ENCODE measurements at regions of chr1 and their contacts with region 1.

Region 1: GRCh38 chr1:155172732-155173477 is at the start of gene KRTCAP2:
- DNase-seq: peak; percentile 87 to 97 (median 94)
- ATAC-seq: peak; percentile 82
- H3K4me3 ChIP-seq: peak within 1 kb of the TSS; percentile 72 to 98
- H3K4me3 Mint-ChIP-seq: peak within 1 kb of the TSS; percentile 96
- H3K27ac ChIP-seq: peak within 1 kb of the TSS; percentile 73 to 98
- H3K27ac Mint-ChIP-seq: peak within 1 kb of the TSS; percentile 97
- H3K4me1 ChIP-seq: peaks cover 47% of the 10 kb centered on the region
- H3K4me1 Mint-ChIP-seq: peaks cover 43% of the 10 kb centered on the region
- H3K27me3 ChIP-seq: no peaks in the 10 kb centered on the region
- H3K27me3 Mint-ChIP-seq: no peaks in the 10 kb centered on the region
- CTCF ChIP-seq: peak; percentile 90
- total RNA-seq, gene KRTCAP2: 58.9 to 71.2 TPM

Region 2: GRCh38 chr1:155050560-155051341 is 122.2 kb before region 1 on chr1 and contains the start of gene ADAM15:
- CTCF ChIA-PET with region 1: interaction called, 14 read pairs
- POLR2A ChIA-PET with region 1: no interaction called
- intact Hi-C with region 1: loop called in 1 of 2 experiments (anchors 5 kb)
- DNase-seq: peak; percentile 64 to 88 (median 80)
- ATAC-seq: peak; percentile 83
- H3K4me3 ChIP-seq: peak within 1 kb of the TSS; percentile 86 to 94
- H3K4me3 Mint-ChIP-seq: peak within 1 kb of the TSS; percentile 86
- H3K27ac ChIP-seq: peak within 1 kb of the TSS; percentile 45 to 65
- H3K27ac Mint-ChIP-seq: peak within 1 kb of the TSS; percentile 85
- H3K4me1 ChIP-seq: peaks cover 27% of the 10 kb centered on the region
- H3K4me1 Mint-ChIP-seq: peaks cover 19% of the 10 kb centered on the region
- H3K27me3 ChIP-seq: no peaks in the 10 kb centered on the region
- H3K27me3 Mint-ChIP-seq: no peaks in the 10 kb centered on the region
- CTCF ChIP-seq: peak; percentile 99
- total RNA-seq, gene ADAM15: 10.8 to 11.8 TPM

Region 3: DNA sequence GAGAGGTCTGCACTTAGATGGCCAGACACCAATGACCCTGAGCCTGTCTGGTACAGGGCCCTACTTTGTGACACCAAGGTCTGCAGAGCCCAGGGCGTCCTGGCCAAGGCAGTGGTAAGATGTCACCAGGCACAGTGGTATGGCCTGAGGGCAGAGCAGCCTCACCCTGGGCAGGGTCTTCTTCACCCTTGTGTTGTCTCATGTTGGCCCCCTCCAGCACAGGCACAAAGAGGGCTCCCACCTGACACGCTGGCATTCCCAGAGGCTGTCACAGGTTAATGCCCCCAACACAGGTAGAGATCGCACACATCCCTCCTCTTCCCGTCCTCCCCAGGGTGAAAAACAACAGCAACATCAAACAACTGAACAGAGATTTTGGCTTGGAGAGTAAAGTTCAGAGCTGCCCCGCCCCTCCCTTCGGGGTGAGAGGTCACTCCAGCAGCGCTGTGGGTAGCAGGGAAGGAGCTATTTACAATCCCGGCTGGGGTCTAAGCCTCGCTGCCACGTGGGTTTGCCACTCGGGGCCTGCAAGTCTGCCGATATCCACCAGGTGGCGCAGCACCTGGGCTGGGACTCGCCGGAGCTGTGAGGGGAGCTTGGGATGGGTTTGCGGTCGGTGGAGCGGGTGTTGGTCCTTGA is 81.7 kb before region 1 on chr1:
- CTCF ChIA-PET with region 1: interaction called, 270 read pairs
- POLR2A ChIA-PET with region 1: interaction called, 10 read pairs
- intact Hi-C with region 1: loop called (anchors 1 kb)
- DNase-seq: peak; percentile 52 to 89 (median 79)
- ATAC-seq: peak; percentile 92
- H3K4me3 ChIP-seq: no peak overlapping the region
- H3K4me3 Mint-ChIP-seq: no peak overlapping the region
- H3K27ac ChIP-seq: no peak overlapping the region
- H3K27ac Mint-ChIP-seq: no peak overlapping the region
- H3K4me1 ChIP-seq: peaks cover 11% of the 10 kb centered on the region
- H3K4me1 Mint-ChIP-seq: peaks cover 8% of the 10 kb centered on the region
- H3K27me3 ChIP-seq: no peaks in the 10 kb centered on the region
- H3K27me3 Mint-ChIP-seq: peaks cover 3% of the 10 kb centered on the region
- CTCF ChIP-seq: peak; percentile 94

Region 4: GRCh38 chr1:155185351-155186066 is 12.6 kb after region 1 on chr1:
- CTCF ChIA-PET with region 1: interaction called, 10 read pairs
- POLR2A ChIA-PET with region 1: no interaction called
- intact Hi-C with region 1: no loop called
- DNase-seq: peak in 1 of 9 experiments; percentile 36
- ATAC-seq: peak; percentile 23
- H3K4me3 ChIP-seq: no peak overlapping the region
- H3K4me3 Mint-ChIP-seq: no peak overlapping the region
- H3K27ac ChIP-seq: no peak overlapping the region
- H3K27ac Mint-ChIP-seq: no peak overlapping the region
- H3K4me1 ChIP-seq: no peaks in the 10 kb centered on the region
- H3K4me1 Mint-ChIP-seq: peaks cover 4% of the 10 kb centered on the region
- H3K27me3 ChIP-seq: no peaks in the 10 kb centered on the region
- H3K27me3 Mint-ChIP-seq: no peaks in the 10 kb centered on the region
- CTCF ChIP-seq: no peak

Region 5: GRCh38 chr1:155208541-155209311 is 35.8 kb after region 1 on chr1 and contains the start of gene MTX1:
- CTCF ChIA-PET with region 1: interaction called, 32 read pairs
- POLR2A ChIA-PET with region 1: no interaction called
- intact Hi-C with region 1: loop called (anchors 1 kb)
- DNase-seq: peak; percentile 77 to 94 (median 88)
- ATAC-seq: peak; percentile 84
- H3K4me3 ChIP-seq: peak within 1 kb of the TSS; percentile 79 to 86
- H3K4me3 Mint-ChIP-seq: peak within 1 kb of the TSS; percentile 86
- H3K27ac ChIP-seq: peak within 1 kb of the TSS; percentile 99
- H3K27ac Mint-ChIP-seq: peak within 1 kb of the TSS; percentile 95
- H3K4me1 ChIP-seq: peaks cover 22% of the 10 kb centered on the region
- H3K4me1 Mint-ChIP-seq: peaks cover 20% of the 10 kb centered on the region
- H3K27me3 ChIP-seq: no peaks in the 10 kb centered on the region
- H3K27me3 Mint-ChIP-seq: no peaks in the 10 kb centered on the region
- CTCF ChIP-seq: no peak
- total RNA-seq, gene MTX1: 24.4 to 25.8 TPM

Region 6: DNA sequence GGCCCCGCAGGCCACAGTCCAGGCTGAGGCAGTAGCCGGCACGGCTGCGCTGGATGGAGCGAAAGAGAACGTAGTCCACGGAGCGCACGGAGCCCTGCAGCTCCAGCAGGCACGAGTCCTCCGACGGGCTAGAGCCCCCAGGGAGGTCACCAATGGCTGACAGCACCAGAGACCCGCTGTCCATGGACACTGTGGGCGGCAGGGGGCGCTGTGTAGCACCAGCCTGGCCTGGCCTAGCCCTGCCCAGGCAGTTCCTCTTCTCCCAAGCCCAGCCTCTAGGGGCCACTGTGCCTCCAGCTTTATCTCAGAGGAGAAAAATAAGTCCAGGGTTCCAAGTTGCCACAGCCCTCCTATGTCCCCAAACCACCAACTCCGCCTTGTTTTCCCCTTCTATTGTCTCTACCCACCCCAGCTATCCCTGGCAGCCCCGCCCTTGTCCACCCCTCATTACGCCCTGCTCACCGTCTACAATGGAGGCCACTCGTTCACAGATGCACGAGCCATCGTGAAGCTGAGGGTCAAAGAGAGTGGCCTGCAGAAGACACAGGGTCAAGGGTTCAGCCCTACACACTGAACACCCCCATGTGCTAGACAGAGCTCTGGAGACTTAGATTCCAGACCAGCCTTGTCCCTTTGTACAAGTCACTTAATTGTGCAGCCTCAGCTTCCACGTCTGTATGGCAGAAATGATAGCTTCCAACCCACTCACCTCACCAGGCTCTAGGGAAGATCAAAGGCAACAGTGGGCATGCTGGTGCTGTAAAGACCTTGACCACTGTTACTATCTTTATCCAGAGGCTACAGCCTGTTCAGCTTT is 77.9 kb after region 1 on chr1:
- CTCF ChIA-PET with region 1: interaction called, 11 read pairs
- POLR2A ChIA-PET with region 1: no interaction called
- intact Hi-C with region 1: no loop called
- DNase-seq: peak; percentile 92 to 99 (median 95)
- ATAC-seq: peak; percentile 96
- H3K4me3 ChIP-seq: peak overlapping the region; percentile 56 to 71
- H3K4me3 Mint-ChIP-seq: peak overlapping the region; percentile 77
- H3K27ac ChIP-seq: peak overlapping the region; percentile 35 to 56
- H3K27ac Mint-ChIP-seq: no peak overlapping the region
- H3K4me1 ChIP-seq: peaks cover 27% of the 10 kb centered on the region
- H3K4me1 Mint-ChIP-seq: peaks cover 27% of the 10 kb centered on the region
- H3K27me3 ChIP-seq: no peaks in the 10 kb centered on the region
- H3K27me3 Mint-ChIP-seq: no peaks in the 10 kb centered on the region
- CTCF ChIP-seq: peak; percentile 98

Measured in CD8-positive, alpha-beta T cell (primary cell).